GM12878 (cell line): ENCODE measurements at regions of chr3 and their contacts with region 1.

Region 1: DNA sequence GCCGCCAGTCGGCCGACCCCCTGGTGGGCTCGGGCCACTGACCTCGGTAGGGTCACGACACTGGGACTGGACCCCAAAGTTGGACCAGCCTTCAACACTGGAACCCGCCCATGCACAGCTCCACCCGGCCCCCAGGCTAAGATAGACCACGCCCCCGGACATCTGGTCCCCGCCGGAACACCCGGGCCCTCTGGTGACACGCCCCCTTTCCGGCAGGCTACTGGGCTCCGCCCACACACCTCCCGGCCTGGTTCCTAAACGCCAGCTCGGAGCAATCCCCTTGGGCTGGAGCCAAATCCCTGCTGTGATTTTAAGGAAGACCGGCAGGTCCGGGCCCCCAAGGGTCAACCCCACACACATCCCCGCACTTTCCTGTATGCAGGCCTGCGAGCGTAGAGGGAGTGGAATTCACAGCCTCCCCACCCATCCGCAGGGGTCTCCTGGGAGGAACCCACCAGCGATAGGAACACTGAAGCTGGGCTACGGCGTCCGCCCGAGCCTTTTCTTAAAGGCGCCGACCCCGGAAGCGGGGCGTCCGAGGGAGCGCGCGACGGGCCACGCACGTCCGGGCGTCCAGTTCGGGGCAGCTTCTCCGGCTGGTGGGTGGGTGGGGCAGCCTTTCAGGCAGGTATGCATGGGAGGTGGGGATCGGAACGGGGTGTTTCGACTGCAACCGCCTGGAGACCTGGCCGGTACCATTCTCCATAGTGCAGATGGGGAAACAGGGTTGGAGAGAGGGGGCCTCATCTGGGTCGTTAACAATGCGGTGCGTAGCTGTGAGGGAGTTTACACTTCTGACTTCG is at the start of gene HEMK1:
- DNase-seq: peak; percentile 76
- ATAC-seq: peak; percentile 84
- H3K4me3 ChIP-seq: peak within 1 kb of the TSS; percentile 81
- H3K27ac ChIP-seq: peak within 1 kb of the TSS; percentile 91
- H3K4me1 ChIP-seq: peaks cover 13% of the 10 kb centered on the region
- H3K27me3 ChIP-seq: no peaks in the 10 kb centered on the region
- CTCF ChIP-seq: no peak
- EP300 ChIP-seq: 0 out of 4 replicates have a peak, but pooled peaks of 1 of the 2 experiments have one; percentile 15
- POLR2A ChIP-seq: peak; percentile 85
- RAD21 ChIP-seq: no peak
- polyA plus RNA-seq, gene HEMK1: 2.8 to 10.5 TPM

Region 2: DNA sequence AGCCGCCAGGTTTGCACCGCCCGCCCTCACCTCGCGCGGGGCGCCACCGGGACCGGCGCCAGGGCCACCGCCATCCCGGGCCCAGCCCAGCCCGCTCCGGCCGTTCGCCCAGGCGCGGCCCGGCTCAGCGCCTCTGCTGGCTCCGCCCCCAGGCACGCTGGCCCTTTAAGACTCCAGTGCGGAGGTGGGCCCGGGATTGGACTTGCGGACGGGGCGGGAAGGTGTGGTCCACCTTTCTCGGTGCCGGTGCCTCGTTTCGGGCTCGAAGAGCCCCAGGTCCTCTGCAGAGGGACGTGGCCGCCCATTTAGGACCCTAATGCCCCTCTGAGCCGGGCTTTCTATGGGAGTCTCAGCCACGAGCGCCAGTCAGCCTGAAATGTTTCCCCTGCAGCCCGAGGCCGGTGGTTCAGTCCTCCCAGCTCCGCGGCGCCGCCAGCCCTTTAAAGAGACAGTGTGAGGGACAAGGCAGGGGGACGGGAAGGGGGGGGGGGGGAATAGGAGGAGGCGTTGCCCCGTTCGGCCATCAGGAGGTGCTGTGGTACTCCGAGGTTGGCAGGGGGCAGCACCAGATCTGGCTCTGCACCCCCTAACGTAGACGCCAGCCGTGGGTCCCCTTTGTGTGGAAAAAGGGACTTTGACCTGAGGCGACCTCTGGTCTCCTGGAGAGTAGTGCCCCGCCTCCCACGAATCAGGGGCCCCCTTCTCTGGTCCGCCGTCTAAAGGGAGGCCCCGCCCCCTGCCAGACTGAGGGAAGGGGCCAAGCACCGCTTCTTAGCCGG is 247.6 kb before region 1 on chr3:
- CTCF ChIA-PET with region 1: no interaction called
- POLR2A ChIA-PET with region 1: no interaction called
- RAD21 ChIA-PET with region 1: no interaction called
- SMC1A ChIA-PET with region 1: no interaction called
- in situ Hi-C with region 1: no loop called
- intact Hi-C with region 1: no loop called
- DNase-seq: peak; percentile 42
- ATAC-seq: peak; percentile 91
- H3K4me3 ChIP-seq: peak overlapping the region; percentile 70
- H3K27ac ChIP-seq: peak overlapping the region; percentile 88
- H3K4me1 ChIP-seq: peaks cover 22% of the 10 kb centered on the region
- H3K27me3 ChIP-seq: no peaks in the 10 kb centered on the region
- CTCF ChIP-seq: peak; percentile 32 to 68 (median 35); a peak in 5 of 6 replicates
- EP300 ChIP-seq: no peak
- POLR2A ChIP-seq: peak; percentile 56; the same call in 1 of the 2 replicates
- RAD21 ChIP-seq: no peak

Region 3: DNA sequence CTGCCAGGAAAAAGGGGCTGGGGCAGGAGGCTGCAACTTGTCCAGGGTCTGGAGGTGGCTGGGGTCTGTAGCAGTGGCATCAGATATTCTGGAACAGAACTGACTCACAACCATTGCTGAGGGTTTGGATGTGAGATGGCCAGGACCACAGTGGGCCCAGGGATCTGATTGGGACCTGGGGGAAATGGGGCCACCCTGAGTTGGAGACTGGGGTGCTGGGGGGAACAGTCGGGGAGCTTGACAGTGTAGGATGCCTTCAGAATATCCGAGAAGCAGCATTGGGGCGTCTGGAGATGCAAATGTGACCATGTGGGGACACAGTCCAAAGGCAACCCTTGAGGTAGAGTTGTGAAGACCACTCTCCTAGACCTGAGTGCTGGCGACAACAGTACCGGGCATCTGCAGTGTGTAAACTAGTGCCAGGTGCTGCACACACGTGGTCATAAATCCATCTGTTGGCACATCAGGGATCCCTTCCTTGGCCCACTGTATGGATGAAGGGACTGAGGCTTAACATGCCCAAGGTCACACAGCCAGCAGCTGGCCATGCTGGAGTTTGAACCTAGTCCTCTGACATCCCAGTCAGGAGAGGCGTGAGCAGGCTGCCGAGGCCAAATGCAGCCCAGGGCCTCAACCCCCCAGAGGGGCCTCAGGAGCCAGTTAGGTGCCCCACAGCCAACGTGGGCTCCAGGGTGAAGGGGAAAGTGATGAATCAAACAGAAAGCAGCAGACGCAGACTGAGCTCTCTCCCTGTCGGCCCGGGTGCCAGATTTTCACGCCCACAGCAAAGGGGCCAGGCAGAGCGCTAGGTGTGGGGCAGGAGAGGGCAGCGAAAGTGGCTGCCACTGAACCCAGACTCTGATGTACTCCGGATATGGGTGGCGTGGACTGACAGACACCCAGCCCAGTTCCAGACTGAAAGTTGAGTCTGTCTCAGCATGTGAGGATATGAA is 18.9 kb after region 1 on chr3:
- CTCF ChIA-PET with region 1: interaction called, 164 read pairs
- POLR2A ChIA-PET with region 1: interaction called, 14 read pairs
- RAD21 ChIA-PET with region 1: interaction called, 96 read pairs
- SMC1A ChIA-PET with region 1: interaction called, 93 read pairs
- in situ Hi-C with region 1: no loop called
- intact Hi-C with region 1: loop called (anchors 2 kb)
- DNase-seq: peak; percentile 32
- ATAC-seq: peak; percentile 72
- H3K4me3 ChIP-seq: no peak overlapping the region
- H3K27ac ChIP-seq: peak overlapping the region; percentile 51
- H3K4me1 ChIP-seq: peaks cover 35% of the 10 kb centered on the region
- H3K27me3 ChIP-seq: no peaks in the 10 kb centered on the region
- CTCF ChIP-seq: no peak
- EP300 ChIP-seq: no peak
- POLR2A ChIP-seq: peak; percentile 5
- RAD21 ChIP-seq: no peak

Region 4: GRCh38 chr3:50600841-50601591 is 31.9 kb after region 1 on chr3:
- CTCF ChIA-PET with region 1: interaction called, 14 read pairs
- POLR2A ChIA-PET with region 1: interaction called, 10 read pairs
- RAD21 ChIA-PET with region 1: interaction called, 6 read pairs
- SMC1A ChIA-PET with region 1: interaction called, 6 read pairs
- in situ Hi-C with region 1: no loop called
- intact Hi-C with region 1: no loop called
- DNase-seq: no peak
- ATAC-seq: peak; percentile 92
- H3K4me3 ChIP-seq: no peak overlapping the region
- H3K27ac ChIP-seq: peak overlapping the region; percentile 37
- H3K4me1 ChIP-seq: peaks cover 21% of the 10 kb centered on the region
- H3K27me3 ChIP-seq: no peaks in the 10 kb centered on the region
- CTCF ChIP-seq: no peak
- EP300 ChIP-seq: no peak
- POLR2A ChIP-seq: no peak
- RAD21 ChIP-seq: no peak

Region 5: DNA sequence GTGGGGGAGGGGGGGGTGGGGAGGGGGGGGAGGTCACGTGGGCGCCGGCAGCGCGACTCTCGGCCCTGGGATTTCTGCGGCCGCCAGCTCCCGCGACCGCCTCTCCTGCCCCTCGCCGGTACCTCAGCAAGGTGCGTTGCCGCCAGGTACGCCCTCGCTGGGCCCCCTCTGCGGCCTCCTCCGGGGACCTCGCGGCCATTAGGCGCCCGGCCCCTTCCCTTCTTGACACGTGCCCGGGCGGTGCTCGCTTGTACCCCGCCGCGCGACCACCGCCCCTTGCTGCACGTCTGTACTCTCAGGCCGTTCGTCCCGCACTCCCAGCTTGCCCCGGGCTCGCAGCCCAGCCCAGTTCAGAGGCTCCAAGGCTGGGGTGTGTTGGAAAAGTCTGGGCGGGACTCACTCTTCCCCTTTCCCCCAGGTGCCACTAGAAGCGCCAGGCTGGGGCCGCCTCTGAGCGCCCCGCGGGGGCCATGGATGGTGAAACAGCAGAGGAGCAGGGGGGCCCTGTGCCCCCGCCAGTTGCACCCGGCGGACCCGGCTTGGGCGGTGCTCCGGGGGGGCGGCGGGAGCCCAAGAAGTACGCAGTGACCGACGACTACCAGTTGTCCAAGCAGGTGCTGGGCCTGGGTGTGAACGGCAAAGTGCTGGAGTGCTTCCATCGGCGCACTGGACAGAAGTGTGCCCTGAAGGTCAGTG is 48.1 kb after region 1 on chr3 and contains the start of gene MAPKAPK3:
- CTCF ChIA-PET with region 1: interaction called, 410 read pairs
- POLR2A ChIA-PET with region 1: interaction called, 23 read pairs
- RAD21 ChIA-PET with region 1: interaction called, 244 read pairs
- SMC1A ChIA-PET with region 1: interaction called, 137 read pairs
- in situ Hi-C with region 1: no loop called
- intact Hi-C with region 1: loop called (anchors 1 kb)
- DNase-seq: no peak
- ATAC-seq: peak; percentile 30
- H3K4me3 ChIP-seq: peak within 1 kb of the TSS; percentile 87
- H3K27ac ChIP-seq: peak within 1 kb of the TSS; percentile 57
- H3K4me1 ChIP-seq: peaks cover 23% of the 10 kb centered on the region
- H3K27me3 ChIP-seq: no peaks in the 10 kb centered on the region
- CTCF ChIP-seq: no peak
- EP300 ChIP-seq: no peak
- POLR2A ChIP-seq: peak; percentile 71
- RAD21 ChIP-seq: no peak
- polyA plus RNA-seq, gene MAPKAPK3: 7.9 to 8.7 TPM

Region 6: DNA sequence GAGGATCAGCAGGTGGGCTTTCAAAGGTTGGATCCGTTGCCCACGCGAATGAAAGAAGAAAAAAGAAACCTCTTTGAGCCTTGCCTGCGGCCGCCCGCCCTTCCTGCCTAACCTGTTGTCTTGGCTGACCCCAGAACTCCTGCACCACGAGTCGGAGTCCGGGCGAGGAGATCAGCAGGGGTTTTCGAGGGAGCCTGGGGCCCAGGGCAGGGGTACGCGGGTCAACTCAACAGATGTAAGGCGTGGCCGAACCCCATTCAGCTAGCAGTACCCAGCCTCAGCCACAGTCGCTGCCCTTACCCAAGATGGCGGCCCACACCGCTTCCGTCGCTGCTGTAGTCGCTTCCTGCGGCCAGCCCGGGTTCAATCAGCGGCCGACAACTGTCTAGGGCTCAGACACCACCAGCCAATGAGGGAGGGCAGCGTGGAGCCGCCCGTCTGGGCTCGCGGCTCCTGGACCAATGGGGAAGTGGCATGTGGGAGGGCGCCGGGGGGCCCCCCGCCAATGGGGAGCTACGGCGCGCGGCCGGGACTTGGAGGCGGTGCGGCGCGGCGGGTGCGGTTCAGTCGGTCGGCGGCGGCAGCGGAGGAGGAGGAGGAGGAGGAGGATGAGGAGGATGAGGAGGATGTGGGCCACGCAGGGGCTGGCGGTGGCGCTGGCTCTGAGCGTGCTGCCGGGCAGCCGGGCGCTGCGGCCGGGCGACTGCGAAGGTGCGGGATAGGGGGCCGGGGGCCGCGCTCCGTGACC is 815.8 kb after region 1 on chr3 and contains the start of gene MANF:
- CTCF ChIA-PET with region 1: interaction called, 3 read pairs
- POLR2A ChIA-PET with region 1: interaction called, 3 read pairs
- RAD21 ChIA-PET with region 1: no interaction called
- SMC1A ChIA-PET with region 1: no interaction called
- in situ Hi-C with region 1: no loop called
- intact Hi-C with region 1: loop called (anchors 5 kb)
- DNase-seq: peak; percentile 93
- ATAC-seq: peak; percentile 97
- H3K4me3 ChIP-seq: peak within 1 kb of the TSS; percentile 96
- H3K27ac ChIP-seq: peak within 1 kb of the TSS; percentile 86
- H3K4me1 ChIP-seq: peaks cover 16% of the 10 kb centered on the region
- H3K27me3 ChIP-seq: no peaks in the 10 kb centered on the region
- CTCF ChIP-seq: peak in 1 of 3 experiments; percentile 6; a peak in 1 of 6 replicates
- EP300 ChIP-seq: peak in 1 of 2 experiments; percentile 13; a peak in 1 of 4 replicates
- POLR2A ChIP-seq: peak; percentile 98
- RAD21 ChIP-seq: no peak
- polyA plus RNA-seq, gene MANF: 22.0 to 68.0 TPM